SK-N-SH (cell line): ENCODE measurements at regions of chr5 and their contacts with region 1.

Region 1: DNA sequence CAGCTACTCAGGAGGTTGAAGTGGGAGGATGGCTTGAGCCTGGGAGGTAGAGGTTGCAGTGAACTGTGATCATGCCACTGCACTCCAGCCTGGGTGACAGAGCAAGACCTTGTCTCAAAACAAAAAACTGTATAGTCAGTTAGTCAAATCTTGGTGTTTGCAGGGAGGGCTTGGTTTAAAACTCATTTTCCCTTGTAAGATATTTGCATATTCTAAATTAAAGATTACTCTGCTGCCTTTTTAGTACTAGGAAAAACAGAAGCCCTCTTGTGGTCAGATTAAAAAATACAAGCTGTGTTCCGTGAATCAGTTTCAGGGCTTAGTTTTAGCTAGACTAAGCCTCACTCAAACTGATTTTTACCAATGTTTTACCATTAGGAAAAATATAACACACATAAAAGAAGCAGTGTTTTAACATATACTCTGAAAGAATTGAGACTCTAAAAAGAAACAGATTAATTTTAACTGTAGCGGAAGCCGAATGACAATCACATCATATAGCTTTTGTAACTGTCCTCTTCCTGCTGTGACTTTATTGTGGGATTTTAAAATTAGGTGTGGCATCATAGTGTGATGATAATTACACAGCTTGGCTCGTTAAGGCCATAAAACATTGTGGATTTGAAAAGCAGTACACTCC is 84.9 kb upstream of the BASP1 start:
- DNase-seq: peak; percentile 46
- H3K4me3 ChIP-seq: no peak overlapping the region; a peak in 1 of 4 replicates
- H3K27ac ChIP-seq: no peak overlapping the region
- H3K4me1 ChIP-seq: peaks cover 0 to 17% of the 10 kb centered on the region in 2 experiments; a peak in 2 of 4 replicates
- H3K27me3 ChIP-seq: no peaks in the 10 kb centered on the region
- CTCF ChIP-seq: peak; percentile 79
- EP300 ChIP-seq: no peak
- RAD21 ChIP-seq: peak; percentile 66

Region 2: DNA sequence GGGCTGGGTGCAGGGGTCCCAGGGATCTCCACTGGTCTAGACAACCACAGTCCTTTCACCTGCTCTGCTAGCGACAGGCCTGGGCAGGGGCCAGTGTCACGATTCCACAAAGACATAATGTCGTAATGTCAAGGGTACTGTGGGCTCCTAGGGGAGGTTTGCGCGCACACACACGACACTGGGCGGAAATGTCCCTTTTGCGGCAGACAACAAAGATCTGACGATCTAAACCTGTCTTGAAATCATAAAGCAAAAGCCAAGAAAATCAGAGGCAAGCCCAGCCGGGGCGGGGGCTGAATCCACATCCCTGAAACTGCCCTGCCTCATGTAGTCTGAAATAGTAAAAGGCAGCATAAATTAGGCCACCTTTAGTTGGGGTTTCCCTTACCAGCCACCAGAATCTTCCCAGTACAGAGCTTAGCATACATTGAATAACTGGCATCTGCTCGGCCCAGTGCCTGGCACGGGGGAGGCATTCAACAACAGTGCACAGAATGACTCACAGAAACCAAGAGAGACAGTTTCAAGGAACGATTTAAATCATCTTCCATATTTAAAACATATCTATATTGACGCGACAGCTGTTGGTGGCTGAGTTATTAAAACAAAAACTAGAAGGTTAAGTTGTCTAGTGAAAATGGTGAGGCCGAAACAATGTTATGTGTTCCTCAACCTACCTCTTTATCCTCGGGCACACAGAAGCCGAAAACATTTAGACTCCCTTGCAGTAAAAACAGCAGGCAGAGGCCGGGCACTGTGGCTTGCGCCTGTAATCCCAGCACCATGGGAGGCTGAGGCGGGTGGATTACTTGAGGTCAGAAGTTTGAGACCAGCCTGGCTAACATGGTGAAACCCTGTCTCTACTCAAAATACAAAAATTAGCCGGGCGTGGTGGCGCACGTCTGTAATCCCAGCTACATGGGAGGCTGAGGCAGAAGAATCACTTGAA is 347.4 kb before region 1 on chr5:
- CTCF ChIA-PET with region 1: interaction called, 21 read pairs
- POLR2A ChIA-PET with region 1: no interaction called
- DNase-seq: no peak
- H3K4me3 ChIP-seq: no peak overlapping the region
- H3K27ac ChIP-seq: peak overlapping the region in 1 of 2 experiments; percentile 46; a peak in 2 of 4 replicates
- H3K4me1 ChIP-seq: peaks cover 2 to 28% of the 10 kb centered on the region in 2 experiments; a peak in 2 of 4 replicates
- H3K27me3 ChIP-seq: no peaks in the 10 kb centered on the region
- CTCF ChIP-seq: no peak
- EP300 ChIP-seq: no peak
- RAD21 ChIP-seq: no peak

Region 3: GRCh38 chr5:16791036-16791705 is 341.4 kb before region 1 on chr5:
- CTCF ChIA-PET with region 1: interaction called, 43 read pairs
- POLR2A ChIA-PET with region 1: no interaction called
- DNase-seq: peak; percentile 69
- H3K4me3 ChIP-seq: no peak overlapping the region; a peak in 1 of 4 replicates
- H3K27ac ChIP-seq: peak overlapping the region in 1 of 2 experiments; percentile 69; a peak in 2 of 4 replicates
- H3K4me1 ChIP-seq: peaks cover 8 to 21% of the 10 kb centered on the region in 2 experiments; a peak in 3 of 4 replicates
- H3K27me3 ChIP-seq: no peaks in the 10 kb centered on the region
- CTCF ChIP-seq: peak; percentile 81
- EP300 ChIP-seq: no peak
- RAD21 ChIP-seq: peak; percentile 93

Region 4: DNA sequence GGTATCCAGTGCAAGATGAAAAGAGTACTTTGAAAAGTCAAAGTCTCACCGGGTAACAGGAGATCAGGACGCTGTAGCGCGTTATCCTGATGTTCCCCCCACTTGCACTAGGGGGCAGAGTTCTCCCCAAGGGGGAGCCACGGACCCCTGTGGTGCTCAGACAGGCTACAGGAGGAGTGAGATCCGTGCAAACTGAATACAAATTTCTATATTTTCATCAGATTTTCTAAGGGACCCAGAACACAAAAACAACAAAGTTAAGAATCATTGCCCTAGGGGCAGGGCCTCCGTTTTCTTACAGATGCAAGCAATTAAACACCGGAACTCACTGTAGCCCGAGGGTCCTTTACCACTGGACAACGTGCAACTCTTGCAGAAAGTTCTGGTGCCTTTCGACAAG is 198.4 kb before region 1 on chr5:
- CTCF ChIA-PET with region 1: interaction called, 13 read pairs
- POLR2A ChIA-PET with region 1: no interaction called
- DNase-seq: peak; percentile 83
- H3K4me3 ChIP-seq: peak overlapping the region; percentile 80 to 85
- H3K27ac ChIP-seq: peak overlapping the region in 1 of 2 experiments; percentile 77; a peak in 2 of 4 replicates
- H3K4me1 ChIP-seq: peaks cover 17 to 26% of the 10 kb centered on the region in 2 experiments; a peak in 3 of 4 replicates
- H3K27me3 ChIP-seq: no peaks in the 10 kb centered on the region
- CTCF ChIP-seq: peak; percentile 96
- EP300 ChIP-seq: no peak
- RAD21 ChIP-seq: peak; percentile 69

Region 5: DNA sequence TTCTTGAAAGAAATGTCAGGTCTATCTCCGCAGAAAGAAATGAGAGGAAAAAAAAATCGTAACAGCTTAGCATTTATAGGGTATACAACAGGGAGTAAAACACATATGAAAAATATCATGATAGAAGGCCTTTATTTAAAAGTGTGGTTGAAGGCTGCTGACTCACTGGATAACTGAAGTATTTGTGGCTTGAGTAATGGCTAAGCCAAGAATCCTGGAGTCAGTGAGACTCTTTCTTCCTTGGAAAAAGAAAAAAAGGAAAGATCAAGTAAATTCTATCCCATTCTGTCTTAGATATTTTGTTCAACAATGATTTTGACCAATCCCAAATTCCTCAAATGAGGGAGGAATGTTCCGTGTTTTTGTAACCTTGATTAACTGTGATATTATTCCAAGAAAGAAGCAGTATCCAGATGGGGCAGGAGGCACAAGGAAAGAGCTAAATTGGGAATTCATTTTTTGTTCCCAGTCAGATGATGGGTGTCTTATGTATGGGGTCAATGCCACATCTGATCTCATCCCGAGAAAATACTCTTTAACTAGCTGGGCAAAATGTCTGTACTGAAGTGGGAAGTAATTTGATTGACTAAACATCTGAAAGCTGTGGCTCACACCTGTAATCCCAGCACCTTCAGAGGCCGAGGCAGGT is 132.1 kb before region 1 on chr5:
- CTCF ChIA-PET with region 1: no interaction called
- POLR2A ChIA-PET with region 1: no interaction called
- DNase-seq: no peak
- H3K4me3 ChIP-seq: no peak overlapping the region
- H3K27ac ChIP-seq: peak overlapping the region; percentile 54 to 92; a peak in 3 of 4 replicates
- H3K4me1 ChIP-seq: peaks cover 0 to 27% of the 10 kb centered on the region in 2 experiments; a peak in 1 of 4 replicates
- H3K27me3 ChIP-seq: no peaks in the 10 kb centered on the region
- CTCF ChIP-seq: no peak
- EP300 ChIP-seq: peak in 1 of 2 experiments; percentile 91; a peak in 2 of 4 replicates
- RAD21 ChIP-seq: no peak

Region 6: GRCh38 chr5:17105744-17106418 is 26.7 kb before region 1 on chr5:
- CTCF ChIA-PET with region 1: interaction called, 10 read pairs
- POLR2A ChIA-PET with region 1: no interaction called
- DNase-seq: no peak
- H3K4me3 ChIP-seq: no peak overlapping the region
- H3K27ac ChIP-seq: peak overlapping the region in 1 of 2 experiments; percentile 84; a peak in 2 of 4 replicates
- H3K4me1 ChIP-seq: peaks cover 0 to 14% of the 10 kb centered on the region in 2 experiments; a peak in 2 of 4 replicates
- H3K27me3 ChIP-seq: no peaks in the 10 kb centered on the region
- CTCF ChIP-seq: no peak
- EP300 ChIP-seq: peak in 1 of 2 experiments; percentile 52; a peak in 1 of 4 replicates
- RAD21 ChIP-seq: no peak

Region 7: GRCh38 chr5:17147617-17148016 is 15.1 kb after region 1 on chr5:
- CTCF ChIA-PET with region 1: interaction called, 17 read pairs
- POLR2A ChIA-PET with region 1: interaction called, 5 read pairs
- DNase-seq: no peak
- H3K4me3 ChIP-seq: no peak overlapping the region
- H3K27ac ChIP-seq: no peak overlapping the region
- H3K4me1 ChIP-seq: no peaks in the 10 kb centered on the region
- H3K27me3 ChIP-seq: no peaks in the 10 kb centered on the region
- CTCF ChIP-seq: no peak
- EP300 ChIP-seq: no peak
- RAD21 ChIP-seq: no peak

Region 8: DNA sequence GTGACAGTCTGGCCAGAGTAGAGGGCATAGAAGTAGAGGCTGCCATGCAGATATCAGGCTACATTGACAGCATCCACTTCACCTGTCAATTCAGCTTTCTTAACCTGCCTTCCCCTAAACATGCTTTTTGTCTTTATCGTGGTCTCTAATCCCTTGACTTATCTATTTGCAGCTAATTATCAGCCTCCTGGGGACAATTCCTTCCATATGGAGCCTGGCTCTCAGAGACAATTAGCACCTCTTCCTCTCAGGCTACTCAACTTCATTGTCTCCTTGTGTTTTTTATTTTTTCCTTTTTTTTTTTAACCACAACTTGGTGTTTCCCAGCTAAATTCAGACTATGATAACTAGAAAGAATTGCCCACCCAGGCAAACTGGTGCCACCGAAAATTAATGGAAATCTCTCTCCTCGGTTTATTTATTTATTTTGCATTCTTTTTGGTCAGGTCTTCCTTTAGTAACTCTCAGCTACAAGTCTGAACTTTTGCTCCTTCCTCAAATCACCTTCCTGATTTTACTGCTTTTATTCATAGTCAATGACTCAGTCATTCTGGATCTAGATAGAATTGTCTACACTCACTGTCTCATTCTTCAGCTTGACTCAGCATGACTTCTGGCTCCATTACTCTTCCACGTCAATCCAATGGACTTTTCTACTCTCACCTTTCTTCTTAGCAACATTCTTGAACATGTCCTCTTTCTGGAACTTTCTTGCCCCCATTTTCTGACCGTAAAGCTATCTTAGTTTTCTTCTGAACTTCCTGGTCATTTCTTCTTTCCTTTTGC is 21.8 kb after region 1 on chr5:
- CTCF ChIA-PET with region 1: interaction called, 17 read pairs
- POLR2A ChIA-PET with region 1: no interaction called
- DNase-seq: no peak
- H3K4me3 ChIP-seq: no peak overlapping the region
- H3K27ac ChIP-seq: peak overlapping the region in 1 of 2 experiments; percentile 68; a peak in 2 of 4 replicates
- H3K4me1 ChIP-seq: peaks cover 0 to 21% of the 10 kb centered on the region in 2 experiments; a peak in 2 of 4 replicates
- H3K27me3 ChIP-seq: no peaks in the 10 kb centered on the region
- CTCF ChIP-seq: no peak
- EP300 ChIP-seq: 0 out of 4 replicates have a peak, but pooled peaks of 1 of the 2 experiments have one; percentile 30
- RAD21 ChIP-seq: no peak

Region 9: DNA sequence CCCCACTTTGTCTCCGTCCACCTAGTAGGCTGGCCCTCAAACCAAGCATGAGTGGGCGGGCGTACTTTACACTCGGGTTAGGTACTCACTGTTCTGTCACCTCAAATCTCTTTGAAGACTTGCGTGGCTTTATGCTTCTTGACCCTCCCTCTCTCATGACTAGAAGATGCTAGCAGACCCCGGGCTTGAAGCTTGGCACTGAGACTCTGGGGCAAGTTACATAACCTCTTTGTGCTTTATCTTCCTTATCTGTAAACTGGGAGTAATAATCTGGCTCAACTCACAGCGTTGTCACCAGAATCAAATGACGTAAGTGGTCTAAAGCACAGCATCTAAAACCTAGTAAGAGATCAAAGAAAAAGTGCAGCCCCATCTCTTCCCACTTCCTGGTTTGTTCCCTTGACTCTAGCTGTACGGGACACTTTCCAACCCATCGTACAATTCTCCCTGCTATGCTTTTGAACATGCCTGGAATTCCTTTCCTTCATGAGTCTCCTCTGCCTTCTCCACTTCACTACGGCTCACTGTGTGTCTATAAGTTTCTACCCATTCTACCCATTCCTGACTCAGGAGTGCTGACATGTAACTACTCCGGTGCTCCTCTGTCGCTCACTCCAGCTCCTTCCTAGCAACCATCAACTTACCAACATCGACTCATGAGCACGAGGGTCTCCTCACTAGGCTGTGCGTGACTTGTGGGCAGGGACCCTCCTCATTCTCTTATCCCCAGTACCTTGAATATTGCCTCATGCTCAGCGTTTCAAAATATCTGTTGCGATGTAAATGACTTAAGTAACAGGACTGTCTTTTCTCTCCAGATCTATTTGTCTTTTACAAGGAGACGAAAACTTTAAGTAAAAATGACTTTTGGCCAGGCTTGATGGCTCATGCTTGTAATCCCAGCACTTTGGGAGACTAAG is 157.8 kb after region 1 on chr5:
- CTCF ChIA-PET with region 1: no interaction called
- POLR2A ChIA-PET with region 1: no interaction called
- DNase-seq: no peak
- H3K4me3 ChIP-seq: no peak overlapping the region
- H3K27ac ChIP-seq: no peak overlapping the region
- H3K4me1 ChIP-seq: no peaks in the 10 kb centered on the region
- H3K27me3 ChIP-seq: no peaks in the 10 kb centered on the region; the same call in 1 of the 2 replicates
- CTCF ChIP-seq: no peak
- EP300 ChIP-seq: no peak
- RAD21 ChIP-seq: no peak

Region 10: GRCh38 chr5:17316970-17317459 is 184.5 kb after region 1 on chr5:
- CTCF ChIA-PET with region 1: no interaction called
- POLR2A ChIA-PET with region 1: no interaction called
- DNase-seq: no peak
- H3K4me3 ChIP-seq: no peak overlapping the region
- H3K27ac ChIP-seq: no peak overlapping the region
- H3K4me1 ChIP-seq: peaks cover 0 to 20% of the 10 kb centered on the region in 2 experiments; a peak in 1 of 4 replicates
- H3K27me3 ChIP-seq: no peaks in the 10 kb centered on the region
- CTCF ChIP-seq: no peak
- EP300 ChIP-seq: no peak
- RAD21 ChIP-seq: no peak